CD4-positive, alpha-beta T cell (primary cell): ENCODE measurements at regions of chr3 and their contacts with region 1.

Region 1: GRCh38 chr3:127672516-127673190 is at the start of gene ABTB1:
- DNase-seq: peak; percentile 75 to 94 (median 86)
- ATAC-seq: peak; percentile 83
- H3K4me3 ChIP-seq: peak within 1 kb of the TSS; percentile 73
- H3K4me3 Mint-ChIP-seq: peak within 1 kb of the TSS; percentile 97
- H3K27ac ChIP-seq: peak within 1 kb of the TSS; percentile 64 to 79
- H3K27ac Mint-ChIP-seq: peak within 1 kb of the TSS; percentile 98
- H3K4me1 ChIP-seq: peaks cover 32% of the 10 kb centered on the region
- H3K4me1 Mint-ChIP-seq: peaks cover 40% of the 10 kb centered on the region
- H3K27me3 ChIP-seq: no peaks in the 10 kb centered on the region
- H3K27me3 Mint-ChIP-seq: no peaks in the 10 kb centered on the region
- CTCF ChIP-seq: no peak
- total RNA-seq, gene ABTB1: 116 to 118 TPM

Region 2: DNA sequence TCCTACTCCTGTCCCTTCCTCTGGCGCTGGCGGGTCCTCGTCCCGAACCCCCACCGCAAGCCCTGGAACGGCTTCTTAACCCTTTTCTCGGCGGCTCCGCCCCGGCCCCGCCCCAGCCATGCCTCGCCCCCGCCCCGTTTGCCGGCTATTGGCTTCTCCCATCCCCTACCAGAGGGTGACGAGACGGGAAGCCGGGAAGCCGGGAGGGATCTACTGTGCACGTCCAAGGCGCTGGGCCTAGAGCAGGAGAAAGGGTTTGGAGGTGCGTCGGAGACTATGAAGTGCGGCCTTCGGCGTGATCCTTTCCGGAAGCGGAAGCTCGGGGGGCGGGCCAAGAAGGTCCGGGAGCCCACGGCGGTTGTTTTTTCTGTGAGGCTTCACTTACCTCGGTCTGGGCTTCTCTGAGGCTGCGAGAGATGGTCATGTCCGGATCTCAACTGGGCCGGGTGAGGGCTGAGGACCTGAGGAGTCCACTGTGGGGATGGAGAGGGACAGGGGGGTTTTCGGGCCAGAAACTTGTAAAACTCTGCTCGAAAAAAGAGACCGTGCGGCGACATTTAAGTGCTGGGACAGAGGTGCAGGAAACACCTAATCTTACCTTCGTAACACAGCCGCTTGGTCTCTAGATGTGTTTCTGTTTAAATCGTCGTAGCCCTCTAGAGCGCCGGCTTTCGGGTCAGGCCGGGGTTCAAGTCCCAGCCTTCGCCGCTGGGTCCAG is 1682.2 kb before region 1 on chr3:
- CTCF ChIA-PET with region 1: no interaction called
- POLR2A ChIA-PET with region 1: no interaction called
- intact Hi-C with region 1: loop called in 1 of 2 experiments (anchors 5 kb)
- DNase-seq: peak; percentile 48 to 85 (median 62)
- ATAC-seq: peak; percentile 88
- H3K4me3 ChIP-seq: peak overlapping the region; percentile 91
- H3K4me3 Mint-ChIP-seq: peak overlapping the region; percentile 98
- H3K27ac ChIP-seq: peak overlapping the region; percentile 73 to 87
- H3K27ac Mint-ChIP-seq: peak overlapping the region; percentile 99
- H3K4me1 ChIP-seq: peaks cover 8% of the 10 kb centered on the region
- H3K4me1 Mint-ChIP-seq: peaks cover 53% of the 10 kb centered on the region
- H3K27me3 ChIP-seq: no peaks in the 10 kb centered on the region
- H3K27me3 Mint-ChIP-seq: no peaks in the 10 kb centered on the region
- CTCF ChIP-seq: no peak

Region 3: GRCh38 chr3:126475413-126476114 is 1197.1 kb before region 1 on chr3 and contains the start of gene ZXDC:
- CTCF ChIA-PET with region 1: no interaction called
- POLR2A ChIA-PET with region 1: no interaction called
- intact Hi-C with region 1: loop called in 1 of 2 experiments (anchors 5 kb)
- DNase-seq: peak; percentile 80 to 97 (median 94)
- ATAC-seq: peak; percentile 75
- H3K4me3 ChIP-seq: peak within 1 kb of the TSS; percentile 74
- H3K4me3 Mint-ChIP-seq: peak within 1 kb of the TSS; percentile 95
- H3K27ac ChIP-seq: peak within 1 kb of the TSS; percentile 23 to 77
- H3K27ac Mint-ChIP-seq: peak within 1 kb of the TSS; percentile 94
- H3K4me1 ChIP-seq: peaks cover 41% of the 10 kb centered on the region
- H3K4me1 Mint-ChIP-seq: peaks cover 51% of the 10 kb centered on the region
- H3K27me3 ChIP-seq: no peaks in the 10 kb centered on the region
- H3K27me3 Mint-ChIP-seq: no peaks in the 10 kb centered on the region
- CTCF ChIP-seq: no peak
- total RNA-seq, gene ZXDC: 60.7 to 61.3 TPM

Region 4: DNA sequence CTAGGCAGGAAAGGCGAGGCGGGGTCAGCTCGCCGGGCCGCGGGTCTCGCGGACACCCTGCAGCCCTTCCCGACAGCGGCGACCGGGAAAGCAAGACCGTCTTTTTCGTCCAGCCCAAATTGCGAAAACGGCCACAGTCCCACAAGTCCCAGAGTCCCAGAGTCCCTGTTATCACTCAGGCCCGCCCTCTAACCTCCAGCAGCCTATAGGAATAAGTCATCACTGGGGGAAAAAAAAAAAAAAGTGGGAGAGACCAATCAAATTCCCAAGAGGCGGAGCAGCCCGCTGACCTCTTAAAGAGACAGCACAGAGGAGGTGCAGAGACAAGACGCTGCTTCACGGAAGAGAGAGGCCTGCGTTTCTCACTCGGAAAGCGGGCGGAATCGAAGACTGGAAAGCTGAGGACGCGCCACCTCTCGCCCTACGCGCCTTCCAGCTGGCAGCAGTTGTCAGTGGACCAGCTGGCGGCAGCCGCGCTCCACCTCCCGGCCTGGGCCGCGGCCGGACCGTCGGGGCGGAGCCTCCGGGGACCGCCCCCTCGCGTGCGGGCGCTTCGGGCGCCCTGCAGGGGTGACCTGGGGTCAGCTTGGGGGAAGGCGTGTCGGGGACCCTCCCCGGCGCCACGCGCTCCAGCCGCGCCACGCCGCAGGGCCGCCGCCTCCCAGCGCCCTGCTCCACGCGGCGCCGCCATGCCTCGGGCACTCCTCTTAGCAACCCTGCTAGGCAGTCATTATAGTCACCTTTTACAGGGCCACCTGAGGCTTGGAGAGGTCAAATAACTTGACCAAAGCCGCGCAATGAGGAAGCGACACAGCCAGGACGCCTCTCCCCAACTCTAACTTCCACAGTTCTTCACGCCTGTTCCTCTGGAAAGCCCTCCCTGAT is 81.8 kb before region 1 on chr3 and contains the start of gene TPRA1:
- CTCF ChIA-PET with region 1: no interaction called
- POLR2A ChIA-PET with region 1: interaction called, 18 read pairs
- intact Hi-C with region 1: loop called (anchors 2 to 5 kb)
- DNase-seq: peak; percentile 51 to 93 (median 74)
- ATAC-seq: peak; percentile 89
- H3K4me3 ChIP-seq: peak within 1 kb of the TSS; percentile 71
- H3K4me3 Mint-ChIP-seq: peak within 1 kb of the TSS; percentile 99
- H3K27ac ChIP-seq: peak within 1 kb of the TSS; percentile 54 to 82
- H3K27ac Mint-ChIP-seq: peak within 1 kb of the TSS; percentile 93
- H3K4me1 ChIP-seq: peaks cover 36% of the 10 kb centered on the region
- H3K4me1 Mint-ChIP-seq: peaks cover 43% of the 10 kb centered on the region
- H3K27me3 ChIP-seq: no peaks in the 10 kb centered on the region
- H3K27me3 Mint-ChIP-seq: no peaks in the 10 kb centered on the region
- CTCF ChIP-seq: no peak
- total RNA-seq, gene TPRA1: 7.5 to 7.8 TPM

Region 5: GRCh38 chr3:127684871-127685707 is 12.4 kb after region 1 on chr3:
- CTCF ChIA-PET with region 1: no interaction called
- POLR2A ChIA-PET with region 1: interaction called, 18 read pairs
- intact Hi-C with region 1: no loop called
- DNase-seq: peak in 1 of 14 experiments; percentile 19
- ATAC-seq: no peak
- H3K4me3 ChIP-seq: no peak overlapping the region
- H3K4me3 Mint-ChIP-seq: no peak overlapping the region
- H3K27ac ChIP-seq: no peak overlapping the region
- H3K27ac Mint-ChIP-seq: no peak overlapping the region
- H3K4me1 ChIP-seq: peaks cover 7% of the 10 kb centered on the region
- H3K4me1 Mint-ChIP-seq: peaks cover 14% of the 10 kb centered on the region
- H3K27me3 ChIP-seq: no peaks in the 10 kb centered on the region
- H3K27me3 Mint-ChIP-seq: no peaks in the 10 kb centered on the region
- CTCF ChIP-seq: no peak

Region 6: GRCh38 chr3:128123538-128124368 is 451.1 kb after region 1 on chr3 and contains the start of gene RUVBL1:
- CTCF ChIA-PET with region 1: no interaction called
- POLR2A ChIA-PET with region 1: no interaction called
- intact Hi-C with region 1: loop called in 1 of 2 experiments (anchors 10 kb)
- DNase-seq: peak; percentile 91 to 99 (median 95)
- ATAC-seq: peak; percentile 93
- H3K4me3 ChIP-seq: peak within 1 kb of the TSS; percentile 98
- H3K4me3 Mint-ChIP-seq: peak within 1 kb of the TSS; percentile 95
- H3K27ac ChIP-seq: peak within 1 kb of the TSS; percentile 67 to 84
- H3K27ac Mint-ChIP-seq: peak within 1 kb of the TSS; percentile 93
- H3K4me1 ChIP-seq: peaks cover 21% of the 10 kb centered on the region
- H3K4me1 Mint-ChIP-seq: peaks cover 28% of the 10 kb centered on the region
- H3K27me3 ChIP-seq: no peaks in the 10 kb centered on the region
- H3K27me3 Mint-ChIP-seq: no peaks in the 10 kb centered on the region
- CTCF ChIP-seq: no peak
- total RNA-seq, gene RUVBL1: 5.6 to 7.7 TPM

Region 7: GRCh38 chr3:128725932-128726690 is 1053.5 kb after region 1 on chr3 and contains the start of gene RAB7A:
- CTCF ChIA-PET with region 1: no interaction called
- POLR2A ChIA-PET with region 1: no interaction called
- intact Hi-C with region 1: loop called in 1 of 2 experiments (anchors 10 kb)
- DNase-seq: peak; percentile 94 to 99 (median 97)
- ATAC-seq: peak; percentile 98
- H3K4me3 ChIP-seq: peak within 1 kb of the TSS; percentile 77
- H3K4me3 Mint-ChIP-seq: peak within 1 kb of the TSS; percentile 100
- H3K27ac ChIP-seq: peak within 1 kb of the TSS; percentile 64 to 78
- H3K27ac Mint-ChIP-seq: peak within 1 kb of the TSS; percentile 97
- H3K4me1 ChIP-seq: peaks cover 47% of the 10 kb centered on the region
- H3K4me1 Mint-ChIP-seq: peaks cover 57% of the 10 kb centered on the region
- H3K27me3 ChIP-seq: no peaks in the 10 kb centered on the region
- H3K27me3 Mint-ChIP-seq: no peaks in the 10 kb centered on the region
- CTCF ChIP-seq: no peak
- total RNA-seq, gene RAB7A: 113 to 121 TPM